Endothelial cell of umbilical vein (primary cell): ENCODE measurements at regions of chr9 and their contacts with region 1.

Region 1: DNA sequence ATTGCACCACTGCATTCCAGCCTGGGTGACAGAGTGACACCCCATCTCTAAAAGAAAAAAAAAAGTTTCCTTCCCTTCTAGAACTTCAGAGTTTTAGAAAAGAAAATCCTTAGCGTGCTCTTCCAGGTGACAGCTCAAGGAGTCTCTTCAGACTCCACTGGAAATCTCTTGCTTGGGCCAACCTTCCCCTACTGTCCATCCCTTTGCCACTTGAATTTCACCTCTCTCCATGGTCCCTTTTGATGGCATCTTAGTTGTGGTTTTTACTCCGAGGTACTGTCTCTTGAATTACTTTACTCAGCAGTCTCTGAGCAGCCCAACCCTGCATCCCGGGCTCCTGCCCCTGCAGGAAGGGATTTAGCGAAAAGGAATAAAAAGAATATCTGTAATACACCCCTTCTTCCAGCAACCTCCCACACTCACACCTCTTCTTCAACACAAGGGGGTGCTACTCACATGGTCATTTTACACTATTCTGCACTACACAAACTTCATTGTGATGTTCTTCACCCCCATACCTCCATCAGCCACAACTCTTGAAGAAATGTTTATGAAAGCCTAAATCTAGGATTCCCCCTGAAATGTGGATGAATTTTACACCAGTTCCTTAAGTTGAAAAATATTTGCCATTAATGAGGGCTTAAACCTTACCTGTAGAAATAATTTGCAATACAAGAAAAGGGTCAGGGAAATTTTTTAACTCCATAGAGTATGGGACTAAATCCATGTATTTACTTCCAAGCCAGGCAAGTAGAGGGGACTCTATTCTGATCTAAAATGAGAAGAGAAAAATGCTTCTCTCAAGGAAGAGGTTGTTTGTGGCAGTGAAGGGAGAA is 25.9 kb downstream of the TPD52L3 start:
- DNase-seq: peak; percentile 72
- H3K4me3 ChIP-seq: no peak overlapping the region
- H3K27ac ChIP-seq: no peak overlapping the region
- H3K4me1 ChIP-seq: peaks cover 4% of the 10 kb centered on the region
- H3K27me3 ChIP-seq: no peaks in the 10 kb centered on the region
- CTCF ChIP-seq: peak; percentile 67 to 69
- POLR2A ChIP-seq: no peak

Region 2: DNA sequence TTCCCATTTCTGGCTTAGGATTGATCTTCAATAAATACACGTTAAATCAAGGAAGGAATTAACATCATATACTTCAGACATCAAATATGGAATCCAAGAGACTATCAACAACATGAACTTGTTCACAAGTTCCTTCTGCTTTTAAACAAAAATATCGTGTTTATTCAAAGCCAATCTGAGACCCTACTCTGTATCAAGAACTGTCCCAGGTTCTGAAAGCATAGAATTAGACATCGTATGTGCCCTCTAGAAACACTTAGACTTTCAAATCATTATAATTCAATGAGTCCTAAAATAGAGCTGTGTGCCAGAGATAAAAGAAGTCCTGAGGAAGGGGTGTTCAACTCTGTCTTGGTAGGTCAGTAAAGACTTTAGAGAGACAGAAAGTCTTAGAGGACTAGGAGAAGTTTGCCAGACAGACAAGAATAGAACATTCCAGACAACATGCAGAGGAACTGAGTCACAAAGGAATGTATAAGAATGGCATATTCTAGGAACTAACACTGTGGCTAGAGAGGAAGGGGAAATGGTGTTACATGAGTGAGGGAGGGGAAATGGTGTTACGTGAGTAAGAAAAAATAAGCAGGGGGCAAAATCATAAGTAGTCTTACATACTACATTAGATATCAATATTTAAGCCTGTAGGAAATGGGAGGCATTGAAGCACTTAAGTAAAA is 23.0 kb before region 1 on chr9:
- CTCF ChIA-PET with region 1: no interaction called
- POLR2A ChIA-PET with region 1: no interaction called
- dilution Hi-C with region 1: no loop called
- intact Hi-C with region 1: no loop called
- DNase-seq: peak; percentile 88
- H3K4me3 ChIP-seq: no peak overlapping the region
- H3K27ac ChIP-seq: peak overlapping the region; percentile 69
- H3K4me1 ChIP-seq: peaks cover 19% of the 10 kb centered on the region
- H3K27me3 ChIP-seq: no peaks in the 10 kb centered on the region
- CTCF ChIP-seq: no peak
- POLR2A ChIP-seq: no peak

Region 3: GRCh38 chr9:6498982-6499381 is 144.9 kb after region 1 on chr9:
- CTCF ChIA-PET with region 1: interaction called, 3 read pairs
- POLR2A ChIA-PET with region 1: no interaction called
- dilution Hi-C with region 1: no loop called
- intact Hi-C with region 1: loop called (anchors 10 kb)
- DNase-seq: no peak
- H3K4me3 ChIP-seq: no peak overlapping the region
- H3K27ac ChIP-seq: no peak overlapping the region
- H3K4me1 ChIP-seq: peaks cover 3% of the 10 kb centered on the region
- H3K27me3 ChIP-seq: no peaks in the 10 kb centered on the region
- CTCF ChIP-seq: no peak
- POLR2A ChIP-seq: no peak

Region 4: DNA sequence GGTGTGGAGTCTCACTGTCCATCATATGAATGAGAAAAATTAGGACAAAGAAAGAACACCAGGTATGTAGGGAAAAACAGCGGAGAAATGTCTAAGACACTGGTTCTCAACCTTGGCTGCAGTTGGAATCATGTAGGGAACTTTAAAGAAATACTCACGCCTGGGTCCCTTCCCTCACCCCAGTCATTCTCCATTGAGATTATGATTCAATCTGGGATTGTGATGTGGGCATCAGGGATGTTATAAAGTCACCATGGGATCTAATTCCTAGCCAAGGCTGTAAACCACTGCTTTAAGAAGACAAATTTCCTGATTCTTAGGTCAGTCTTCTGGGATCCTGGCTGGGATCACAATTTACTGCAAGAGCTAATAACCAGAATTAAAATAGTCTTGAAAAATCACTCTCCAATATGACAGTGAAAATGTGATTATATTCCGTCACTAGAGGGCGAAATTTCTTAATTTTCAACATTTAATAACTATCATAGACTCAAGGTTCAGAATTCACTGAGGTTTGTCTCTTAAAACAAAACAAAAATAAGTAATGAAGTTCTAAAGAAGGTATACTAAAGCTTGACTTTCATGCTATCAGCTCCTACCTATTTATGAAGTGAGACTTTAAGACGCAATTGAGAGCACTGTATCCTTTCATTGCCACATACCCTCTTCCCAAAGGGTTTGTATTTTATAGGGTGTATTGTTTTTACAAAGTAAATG is 231.0 kb after region 1 on chr9:
- CTCF ChIA-PET with region 1: interaction called, 6 read pairs
- POLR2A ChIA-PET with region 1: no interaction called
- dilution Hi-C with region 1: no loop called
- intact Hi-C with region 1: loop called (anchors 1 kb)
- DNase-seq: peak; percentile 58
- H3K4me3 ChIP-seq: no peak overlapping the region
- H3K27ac ChIP-seq: no peak overlapping the region
- H3K4me1 ChIP-seq: no peaks in the 10 kb centered on the region
- H3K27me3 ChIP-seq: peaks cover 0 to 2% of the 10 kb centered on the region in 2 experiments
- CTCF ChIP-seq: peak; percentile 16 to 23
- POLR2A ChIP-seq: no peak

Region 5: DNA sequence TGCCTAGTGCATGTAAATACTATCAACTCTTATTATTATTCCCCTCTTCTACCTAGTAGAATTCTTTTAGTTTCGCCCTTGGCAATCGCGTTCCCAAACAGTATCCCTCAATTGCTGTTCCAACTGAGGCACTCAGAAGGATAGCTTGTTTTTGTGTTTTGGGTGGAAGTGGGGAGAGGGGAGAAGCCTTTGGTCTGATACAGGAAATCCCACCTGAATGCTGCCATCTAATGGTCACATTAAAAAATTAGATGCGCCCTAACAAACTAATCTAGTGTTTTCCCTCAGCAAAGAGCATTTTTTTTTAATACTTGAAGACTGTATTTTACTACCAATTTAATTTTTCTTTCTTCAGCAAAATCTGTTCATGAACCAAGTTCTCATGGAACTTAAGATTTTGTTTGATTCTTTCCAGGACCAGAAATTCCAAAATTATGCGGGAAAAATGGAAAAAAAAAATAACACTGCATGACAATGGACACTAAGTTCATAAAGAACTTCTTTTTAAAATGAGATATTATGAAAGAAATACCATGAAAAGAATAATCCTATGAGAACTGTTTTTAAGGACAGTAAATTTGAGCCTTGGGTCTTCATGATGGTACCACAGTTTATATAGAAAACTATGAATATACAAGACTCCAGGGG is 313.7 kb after region 1 on chr9:
- CTCF ChIA-PET with region 1: interaction called, 15 read pairs
- POLR2A ChIA-PET with region 1: no interaction called
- dilution Hi-C with region 1: no loop called
- intact Hi-C with region 1: loop called (anchors 1 kb)
- DNase-seq: peak; percentile 46
- H3K4me3 ChIP-seq: no peak overlapping the region
- H3K27ac ChIP-seq: no peak overlapping the region
- H3K4me1 ChIP-seq: peaks cover 3% of the 10 kb centered on the region
- H3K27me3 ChIP-seq: no peaks in the 10 kb centered on the region
- CTCF ChIP-seq: peak; percentile 28 to 45
- POLR2A ChIP-seq: no peak

Region 6: GRCh38 chr9:6739218-6739617 is 385.1 kb after region 1 on chr9:
- CTCF ChIA-PET with region 1: interaction called, 16 read pairs
- POLR2A ChIA-PET with region 1: no interaction called
- dilution Hi-C with region 1: no loop called
- intact Hi-C with region 1: loop called (anchors 1 kb)
- DNase-seq: peak; percentile 28
- H3K4me3 ChIP-seq: no peak overlapping the region
- H3K27ac ChIP-seq: no peak overlapping the region
- H3K4me1 ChIP-seq: no peaks in the 10 kb centered on the region
- H3K27me3 ChIP-seq: no peaks in the 10 kb centered on the region
- CTCF ChIP-seq: peak; percentile 16 to 25
- POLR2A ChIP-seq: no peak